PC-9 (cell line): ENCODE measurements at regions of chr22 and their contacts with region 1.

Region 1: DNA sequence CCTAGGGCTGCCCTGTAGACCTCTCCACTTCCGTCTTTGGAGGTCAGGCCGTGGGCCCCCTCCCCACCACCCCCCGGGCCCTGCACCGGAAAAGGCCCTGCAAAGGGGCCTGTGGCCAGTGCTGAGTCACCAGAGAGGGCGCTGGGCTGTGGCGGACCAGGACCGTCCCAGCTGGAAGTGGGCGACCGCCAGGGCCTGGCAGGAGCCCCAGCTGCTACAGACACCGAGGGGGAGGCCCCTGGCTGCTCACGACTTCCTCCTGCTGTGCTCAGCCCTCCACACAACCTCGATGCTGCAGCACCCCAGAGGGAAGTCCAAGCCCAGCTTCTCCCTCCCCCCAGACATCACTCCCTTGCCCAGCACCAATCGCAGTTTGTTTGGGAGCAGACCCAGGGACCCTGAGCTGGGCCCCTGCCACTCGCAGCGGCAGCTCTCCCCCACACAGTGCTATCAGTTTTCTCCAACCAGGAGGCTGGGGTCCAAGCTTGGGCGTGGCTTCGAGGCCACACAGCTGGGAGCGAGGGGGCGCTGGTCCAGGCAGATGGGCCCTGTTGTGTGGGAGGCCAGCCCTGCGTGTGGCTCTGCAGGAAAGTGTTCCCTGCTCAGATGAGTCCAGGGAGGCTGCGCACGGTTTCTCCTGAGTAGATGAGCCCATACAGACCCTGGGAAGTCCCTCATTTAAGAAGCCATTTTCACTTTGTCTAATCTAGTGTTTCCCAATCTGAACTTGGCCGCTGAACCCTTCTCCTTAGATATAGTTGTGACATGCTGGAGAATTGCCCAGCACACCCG is 5.6 kb upstream of the SH3BP1 start:
- DNase-seq: peak in 1 of 2 experiments; percentile 50
- H3K4me3 ChIP-seq: no peak overlapping the region
- H3K27ac ChIP-seq: no peak overlapping the region
- H3K4me1 ChIP-seq: peaks cover 6% of the 10 kb centered on the region
- H3K27me3 ChIP-seq: no peaks in the 10 kb centered on the region
- CTCF ChIP-seq: no peak

Region 2: DNA sequence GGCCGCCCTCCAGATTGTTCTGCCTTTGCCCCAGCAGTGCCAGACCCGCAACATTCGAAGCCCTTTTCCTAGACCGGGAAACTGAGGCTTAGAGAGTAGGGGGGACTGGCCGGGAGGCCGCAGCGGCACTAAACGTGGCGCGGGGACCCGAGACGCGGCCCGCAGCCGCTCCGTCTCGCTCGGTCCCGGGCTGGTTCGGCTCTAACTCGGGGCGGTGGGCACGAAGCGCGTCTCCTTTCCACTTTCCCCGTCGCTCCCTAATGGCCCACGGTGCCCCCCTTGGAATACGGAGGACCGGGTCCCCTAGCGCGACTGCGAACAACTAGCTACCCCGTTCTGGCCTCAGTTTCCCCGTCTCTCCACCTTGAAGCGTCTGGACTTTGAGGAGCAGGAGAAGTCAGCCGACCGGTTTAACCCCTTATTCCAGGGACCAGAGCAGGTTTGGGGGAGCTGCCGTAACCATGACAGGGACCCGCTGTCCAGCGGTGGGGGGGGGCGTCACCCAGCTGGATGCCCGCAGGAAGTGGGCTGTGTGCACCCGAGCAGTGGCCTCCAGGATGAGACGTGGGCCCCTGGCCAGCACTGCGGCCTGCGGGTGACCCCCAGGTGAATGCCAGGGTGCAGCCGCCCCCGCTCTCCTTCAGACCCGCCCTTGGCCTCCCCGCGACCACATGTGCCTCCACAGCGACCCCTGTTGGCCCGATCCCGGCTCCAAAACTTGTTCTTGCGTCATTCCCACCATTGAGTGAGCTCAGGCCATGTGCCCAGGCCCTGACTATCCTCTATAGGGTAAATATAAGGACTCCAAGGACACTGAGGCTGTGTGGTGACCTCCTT is 72.4 kb before region 1 on chr22:
- CTCF ChIA-PET with region 1: interaction called, 8 read pairs
- POLR2A ChIA-PET with region 1: interaction called, 14 read pairs
- intact Hi-C with region 1: no loop called
- DNase-seq: peak; percentile 78 to 94
- H3K4me3 ChIP-seq: peak overlapping the region; percentile 95
- H3K27ac ChIP-seq: peak overlapping the region; percentile 82
- H3K4me1 ChIP-seq: peaks cover 57% of the 10 kb centered on the region
- H3K27me3 ChIP-seq: no peaks in the 10 kb centered on the region
- CTCF ChIP-seq: peak; percentile 98

Region 3: GRCh38 chr22:37784829-37785493 is 151.1 kb after region 1 on chr22:
- CTCF ChIA-PET with region 1: no interaction called
- POLR2A ChIA-PET with region 1: interaction called, 22 read pairs
- intact Hi-C with region 1: no loop called
- DNase-seq: peak; percentile 88 to 97
- H3K4me3 ChIP-seq: no peak overlapping the region
- H3K27ac ChIP-seq: peak overlapping the region; percentile 74
- H3K4me1 ChIP-seq: peaks cover 49% of the 10 kb centered on the region
- H3K27me3 ChIP-seq: no peaks in the 10 kb centered on the region
- CTCF ChIP-seq: no peak

Region 4: DNA sequence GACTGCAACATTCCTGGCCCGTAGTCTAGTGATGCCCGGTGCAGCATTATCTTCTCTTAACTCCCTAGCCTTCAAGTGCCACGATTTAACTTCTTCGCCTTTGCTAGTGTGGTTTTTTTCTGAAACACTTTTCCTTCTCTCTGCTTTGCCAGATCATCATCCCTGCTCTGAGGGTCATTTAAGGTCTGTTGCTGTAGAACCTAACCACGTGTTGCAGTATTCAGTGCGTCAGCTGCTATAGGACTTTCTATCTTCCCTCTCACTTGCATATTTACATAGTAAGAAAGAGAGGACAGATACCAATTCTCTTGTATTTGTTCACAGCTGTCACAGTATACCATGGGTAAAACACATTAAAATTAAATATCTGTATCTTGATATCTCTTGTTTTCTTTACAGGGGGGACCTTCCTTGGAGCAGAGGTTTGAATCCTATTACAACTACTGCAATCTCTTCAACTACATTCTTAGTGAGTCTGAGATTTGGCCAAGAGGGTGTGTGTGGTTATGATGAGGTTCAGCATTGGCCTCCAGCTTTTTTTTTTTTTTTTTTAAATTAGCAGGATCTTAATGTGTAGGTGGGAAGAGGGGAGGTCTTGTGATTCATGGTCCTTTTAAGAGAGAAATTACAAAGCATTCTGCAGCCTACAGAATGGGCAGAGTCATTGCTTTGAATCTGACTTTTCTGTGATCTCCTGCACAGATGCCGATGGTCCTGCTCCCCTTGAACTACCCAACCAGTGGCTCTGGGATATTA is 228.9 kb after region 1 on chr22:
- CTCF ChIA-PET with region 1: no interaction called
- POLR2A ChIA-PET with region 1: interaction called, 14 read pairs
- intact Hi-C with region 1: no loop called
- DNase-seq: no peak
- H3K4me3 ChIP-seq: no peak overlapping the region
- H3K27ac ChIP-seq: no peak overlapping the region
- H3K4me1 ChIP-seq: no peaks in the 10 kb centered on the region
- H3K27me3 ChIP-seq: no peaks in the 10 kb centered on the region
- CTCF ChIP-seq: no peak